ENCODE measurements at regions of chr1 and their contacts with region 1.

Region 1: DNA sequence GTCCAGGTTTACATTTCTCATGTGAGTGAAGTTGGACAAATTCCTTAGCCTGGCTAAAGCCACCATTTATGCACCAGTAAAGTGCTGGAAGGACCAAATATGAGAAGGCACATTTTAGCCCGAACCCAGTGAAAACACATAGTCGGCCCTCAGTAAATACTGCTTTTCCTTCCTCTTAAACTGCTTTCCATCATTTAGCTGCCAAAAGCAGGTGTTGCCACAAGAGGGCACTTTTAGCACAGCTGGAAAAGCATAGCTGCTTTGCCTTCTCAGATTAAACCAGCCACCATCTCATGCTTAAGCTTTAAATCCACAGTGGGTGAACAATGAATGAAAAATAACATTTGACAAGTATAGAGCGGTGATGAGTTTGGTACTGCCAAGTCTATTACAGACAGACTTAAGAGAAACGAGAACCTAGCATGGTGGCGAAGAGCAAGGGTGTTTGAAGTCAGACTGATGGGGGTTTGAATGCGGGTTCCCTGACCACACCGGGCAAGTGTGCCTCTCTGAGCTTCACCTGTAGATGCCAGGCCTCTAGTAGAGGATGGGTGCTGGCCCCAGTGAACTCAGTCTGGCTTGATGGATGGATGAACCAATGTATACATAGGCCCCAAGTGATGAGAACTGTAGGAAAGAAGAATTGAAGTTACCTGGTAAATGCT is 57.8 kb downstream of the SLC35D1 start:
- DNase-seq: peak; percentile 18
- ATAC-seq: peak; percentile 86
- H3K4me3 Mint-ChIP-seq: no peak overlapping the region
- H3K27ac Mint-ChIP-seq: no peak overlapping the region
- H3K4me1 Mint-ChIP-seq: peaks cover 10% of the 10 kb centered on the region
- H3K27me3 Mint-ChIP-seq: no peaks in the 10 kb centered on the region
- CTCF ChIP-seq: no peak

Region 2: DNA sequence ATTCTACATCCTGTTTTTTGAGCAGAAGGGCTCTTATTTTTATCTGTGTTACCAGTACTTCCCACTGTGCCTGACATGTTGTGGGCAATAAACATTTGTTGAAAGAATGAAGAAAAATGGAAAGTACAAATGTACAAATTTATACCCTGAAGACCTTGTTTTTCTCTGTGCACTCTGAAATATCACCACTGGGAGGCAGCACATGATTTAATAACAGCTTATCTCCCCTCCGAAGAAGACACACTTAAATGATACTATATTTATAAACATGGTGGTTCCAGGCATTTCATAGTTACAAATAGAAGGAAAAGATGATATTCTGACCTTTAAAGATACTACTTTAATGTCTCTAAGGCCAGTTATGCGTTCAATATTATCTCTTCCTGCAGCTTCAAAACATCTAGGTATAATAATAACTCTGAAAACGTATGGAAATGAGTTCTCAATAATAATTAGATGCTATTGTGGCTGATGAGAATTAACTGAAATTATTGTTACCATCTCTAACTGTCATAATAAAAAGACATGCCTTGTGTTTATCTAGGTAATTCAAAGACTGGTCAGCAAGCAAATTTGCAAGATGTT is 231.1 kb before region 1 on chr1:
- CTCF ChIA-PET with region 1: interaction called, 12 read pairs
- POLR2A ChIA-PET with region 1: no interaction called
- intact Hi-C with region 1: loop called (anchors 1 kb)
- DNase-seq: no peak
- ATAC-seq: peak; percentile 25
- H3K4me3 Mint-ChIP-seq: no peak overlapping the region
- H3K27ac Mint-ChIP-seq: no peak overlapping the region
- H3K4me1 Mint-ChIP-seq: no peaks in the 10 kb centered on the region
- H3K27me3 Mint-ChIP-seq: no peaks in the 10 kb centered on the region
- CTCF ChIP-seq: no peak

Region 3: GRCh38 chr1:66938613-66939012 is 57.5 kb before region 1 on chr1:
- CTCF ChIA-PET with region 1: no interaction called
- POLR2A ChIA-PET with region 1: no interaction called
- intact Hi-C with region 1: loop called (anchors 5 kb)
- DNase-seq: no peak
- ATAC-seq: no peak
- H3K4me3 Mint-ChIP-seq: no peak overlapping the region
- H3K27ac Mint-ChIP-seq: no peak overlapping the region
- H3K4me1 Mint-ChIP-seq: peaks cover 51% of the 10 kb centered on the region
- H3K27me3 Mint-ChIP-seq: no peaks in the 10 kb centered on the region
- CTCF ChIP-seq: no peak

Region 4: GRCh38 chr1:66968574-66968973 is 27.6 kb before region 1 on chr1:
- CTCF ChIA-PET with region 1: no interaction called
- POLR2A ChIA-PET with region 1: no interaction called
- intact Hi-C with region 1: no loop called
- DNase-seq: no peak
- ATAC-seq: no peak
- H3K4me3 Mint-ChIP-seq: no peak overlapping the region
- H3K27ac Mint-ChIP-seq: no peak overlapping the region
- H3K4me1 Mint-ChIP-seq: no peaks in the 10 kb centered on the region
- H3K27me3 Mint-ChIP-seq: no peaks in the 10 kb centered on the region
- CTCF ChIP-seq: no peak

Region 5: GRCh38 chr1:67053785-67054772 is 57.9 kb after region 1 on chr1 and contains the start of gene SLC35D1:
- CTCF ChIA-PET with region 1: interaction called, 12 read pairs
- POLR2A ChIA-PET with region 1: interaction called, 3 read pairs
- intact Hi-C with region 1: loop called (anchors 5 kb)
- DNase-seq: peak; percentile 82
- ATAC-seq: peak; percentile 85
- H3K4me3 Mint-ChIP-seq: peak within 1 kb of the TSS; percentile 92
- H3K27ac Mint-ChIP-seq: peak within 1 kb of the TSS; percentile 92
- H3K4me1 Mint-ChIP-seq: peaks cover 21% of the 10 kb centered on the region
- H3K27me3 Mint-ChIP-seq: no peaks in the 10 kb centered on the region
- CTCF ChIP-seq: no peak
- total RNA-seq, gene SLC35D1: 10.1 and 11.1 TPM in 2 replicates

Region 6: GRCh38 chr1:67184838-67185421 is 188.8 kb after region 1 on chr1:
- CTCF ChIA-PET with region 1: no interaction called
- POLR2A ChIA-PET with region 1: no interaction called
- intact Hi-C with region 1: loop called (anchors 1 kb)
- DNase-seq: no peak
- ATAC-seq: no peak
- H3K4me3 Mint-ChIP-seq: no peak overlapping the region
- H3K27ac Mint-ChIP-seq: no peak overlapping the region
- H3K4me1 Mint-ChIP-seq: no peaks in the 10 kb centered on the region
- H3K27me3 Mint-ChIP-seq: peaks cover 9% of the 10 kb centered on the region
- CTCF ChIP-seq: no peak

Region 7: DNA sequence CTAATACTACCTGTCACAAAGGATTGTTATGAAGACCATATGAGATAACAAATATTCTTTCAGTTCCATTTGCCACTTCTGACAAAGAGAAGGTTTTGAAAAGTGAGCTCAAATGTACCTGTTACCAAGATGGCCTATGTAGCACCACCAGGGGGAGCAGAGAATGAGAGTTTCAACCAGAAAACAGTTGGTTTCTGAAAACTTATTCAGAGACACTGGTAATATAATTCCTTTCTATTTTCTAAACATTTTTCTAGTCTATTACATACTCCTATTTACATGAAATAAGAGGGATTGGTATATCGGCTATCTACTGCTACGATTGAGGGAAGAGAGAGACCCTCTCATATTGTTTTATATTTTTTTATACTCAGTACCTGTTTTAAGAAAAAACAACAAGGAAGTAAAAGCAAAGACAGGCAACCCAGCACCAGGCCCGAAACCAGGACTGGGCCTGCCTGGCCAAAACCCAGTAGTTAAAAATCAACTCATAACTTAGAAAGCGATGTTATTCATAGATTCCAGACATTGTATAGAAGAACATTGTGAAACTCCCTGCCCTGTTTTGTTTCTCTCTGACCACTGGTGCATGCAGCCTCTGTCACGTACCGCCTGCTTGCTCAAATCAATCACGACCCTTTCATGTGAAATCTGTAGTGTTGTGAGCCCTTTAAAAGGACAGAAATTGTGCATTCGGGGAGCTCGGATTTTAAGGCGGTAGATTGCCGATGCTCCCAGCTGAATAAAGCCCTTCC is 218.4 kb after region 1 on chr1:
- CTCF ChIA-PET with region 1: interaction called, 43 read pairs
- POLR2A ChIA-PET with region 1: no interaction called
- intact Hi-C with region 1: loop called (anchors 1 kb)
- DNase-seq: no peak
- ATAC-seq: peak; percentile 62
- H3K4me3 Mint-ChIP-seq: no peak overlapping the region
- H3K27ac Mint-ChIP-seq: no peak overlapping the region
- H3K4me1 Mint-ChIP-seq: peaks cover 9% of the 10 kb centered on the region
- H3K27me3 Mint-ChIP-seq: no peaks in the 10 kb centered on the region
- CTCF ChIP-seq: no peak

Region 8: GRCh38 chr1:67500413-67500959 is 504.3 kb after region 1 on chr1:
- CTCF ChIA-PET with region 1: no interaction called
- POLR2A ChIA-PET with region 1: no interaction called
- intact Hi-C with region 1: loop called (anchors 1 kb)
- DNase-seq: peak; percentile 70
- ATAC-seq: peak; percentile 98
- H3K4me3 Mint-ChIP-seq: no peak overlapping the region
- H3K27ac Mint-ChIP-seq: no peak overlapping the region
- H3K4me1 Mint-ChIP-seq: peaks cover 4% of the 10 kb centered on the region
- H3K27me3 Mint-ChIP-seq: peaks cover 15% of the 10 kb centered on the region
- CTCF ChIP-seq: peak; percentile 80